ENCODE measurements at regions of chr3 and their contacts with region 1.

Region 1: GRCh38 chr3:47522082-47522987 is 8.8 kb upstream of the ELP6 start:
- DNase-seq: peak; percentile 75
- H3K4me3 ChIP-seq: no peak overlapping the region
- H3K27ac ChIP-seq: no peak overlapping the region
- H3K4me1 ChIP-seq: peaks cover 6% of the 10 kb centered on the region
- H3K27me3 ChIP-seq: no peaks in the 10 kb centered on the region
- CTCF ChIP-seq: peak; percentile 90 to 93

Region 2: DNA sequence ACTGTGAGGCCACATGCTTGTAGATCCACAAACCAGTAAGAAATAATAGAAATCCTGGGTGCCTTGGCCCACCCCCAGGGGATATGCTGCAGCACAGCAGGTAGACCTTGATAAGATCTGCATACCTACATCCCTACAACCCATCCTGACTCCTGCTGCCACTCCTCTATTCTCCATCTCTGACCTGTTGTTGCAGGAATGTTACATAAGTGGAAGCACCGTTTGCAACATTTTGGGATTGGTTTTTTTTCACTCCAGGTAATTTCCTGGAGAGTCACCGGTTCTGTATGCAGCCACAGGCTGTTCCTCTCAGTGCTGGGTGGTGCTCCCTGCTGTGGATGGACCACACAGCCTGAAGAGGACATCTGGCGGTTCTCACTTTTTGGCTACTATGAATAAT is 72.5 kb after region 1 on chr3:
- CTCF ChIA-PET with region 1: no interaction called
- dilution Hi-C with region 1: no loop called
- in situ Hi-C with region 1: no loop called
- intact Hi-C with region 1: loop called (anchors 1 kb)
- DNase-seq: peak; percentile 80
- H3K4me3 ChIP-seq: no peak overlapping the region
- H3K27ac ChIP-seq: no peak overlapping the region
- H3K4me1 ChIP-seq: peaks cover 5% of the 10 kb centered on the region
- H3K27me3 ChIP-seq: no peaks in the 10 kb centered on the region
- CTCF ChIP-seq: no peak

Region 3: GRCh38 chr3:47612178-47612577 is 89.8 kb after region 1 on chr3:
- CTCF ChIA-PET with region 1: no interaction called
- dilution Hi-C with region 1: no loop called
- in situ Hi-C with region 1: no loop called
- intact Hi-C with region 1: loop called (anchors 5 kb)
- DNase-seq: peak; percentile 11
- H3K4me3 ChIP-seq: no peak overlapping the region
- H3K27ac ChIP-seq: no peak overlapping the region
- H3K4me1 ChIP-seq: peaks cover 7% of the 10 kb centered on the region
- H3K27me3 ChIP-seq: no peaks in the 10 kb centered on the region
- CTCF ChIP-seq: no peak

Region 4: DNA sequence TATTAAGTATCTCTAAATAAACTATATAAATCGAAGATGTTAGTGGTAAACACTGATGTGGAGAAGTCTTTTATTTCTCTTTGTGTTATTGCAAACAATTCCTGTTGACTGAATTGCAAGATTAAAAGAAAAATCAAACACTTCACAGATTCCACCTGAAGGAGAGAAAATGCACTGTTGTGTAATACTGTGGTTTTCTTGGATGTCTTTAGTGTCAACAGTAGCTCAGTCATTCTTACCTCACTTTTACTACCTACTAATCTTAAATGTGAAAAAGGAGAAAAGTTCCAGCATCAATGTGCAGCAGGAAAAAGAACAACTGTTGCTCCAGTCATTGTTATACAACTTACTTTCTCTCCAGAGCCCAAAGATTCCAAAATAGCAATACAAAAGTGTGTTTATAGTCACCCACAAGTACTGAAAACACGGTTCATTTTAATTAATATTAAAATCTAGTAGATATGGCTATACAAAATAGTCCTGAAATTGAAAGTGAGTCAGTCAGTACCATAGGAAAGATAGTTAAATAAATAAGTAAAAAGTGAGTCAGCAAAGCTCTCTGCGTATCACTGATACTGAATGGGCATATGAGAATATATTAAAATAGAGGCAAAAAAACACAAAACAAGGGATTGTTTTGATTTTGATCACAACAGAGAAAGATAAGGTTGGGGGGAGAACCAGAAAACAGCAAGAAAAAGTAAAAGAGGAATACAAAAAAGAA is 146.9 kb after region 1 on chr3:
- CTCF ChIA-PET with region 1: no interaction called
- dilution Hi-C with region 1: no loop called
- in situ Hi-C with region 1: no loop called
- intact Hi-C with region 1: loop called (anchors 1 kb)
- DNase-seq: peak; percentile 51
- H3K4me3 ChIP-seq: no peak overlapping the region
- H3K27ac ChIP-seq: no peak overlapping the region
- H3K4me1 ChIP-seq: peaks cover 3% of the 10 kb centered on the region
- H3K27me3 ChIP-seq: no peaks in the 10 kb centered on the region
- CTCF ChIP-seq: no peak

Region 5: GRCh38 chr3:47791193-47791855 is 269.0 kb after region 1 on chr3:
- CTCF ChIA-PET with region 1: interaction called, 5 read pairs
- dilution Hi-C with region 1: no loop called
- in situ Hi-C with region 1: loop called (anchors 5 to 10 kb)
- intact Hi-C with region 1: loop called (anchors 1 kb)
- DNase-seq: no peak
- H3K4me3 ChIP-seq: no peak overlapping the region
- H3K27ac ChIP-seq: no peak overlapping the region
- H3K4me1 ChIP-seq: no peaks in the 10 kb centered on the region
- H3K27me3 ChIP-seq: no peaks in the 10 kb centered on the region
- CTCF ChIP-seq: no peak

Region 6: GRCh38 chr3:47824541-47825473 is 302.5 kb after region 1 on chr3:
- CTCF ChIA-PET with region 1: no interaction called
- dilution Hi-C with region 1: no loop called
- in situ Hi-C with region 1: no loop called
- intact Hi-C with region 1: loop called (anchors 1 kb)
- DNase-seq: peak; percentile 82
- H3K4me3 ChIP-seq: peak overlapping the region; percentile 73 to 93 (median 82)
- H3K27ac ChIP-seq: peak overlapping the region; percentile 61
- H3K4me1 ChIP-seq: peaks cover 5% of the 10 kb centered on the region
- H3K27me3 ChIP-seq: no peaks in the 10 kb centered on the region
- CTCF ChIP-seq: peak; percentile 51 to 70

Region 7: GRCh38 chr3:48151058-48151806 is 628.9 kb after region 1 on chr3:
- CTCF ChIA-PET with region 1: no interaction called
- dilution Hi-C with region 1: no loop called
- in situ Hi-C with region 1: no loop called
- intact Hi-C with region 1: loop called (anchors 1 kb)
- DNase-seq: peak; percentile 66
- H3K4me3 ChIP-seq: no peak overlapping the region
- H3K27ac ChIP-seq: no peak overlapping the region
- H3K4me1 ChIP-seq: peaks cover 12% of the 10 kb centered on the region
- H3K27me3 ChIP-seq: no peaks in the 10 kb centered on the region
- CTCF ChIP-seq: peak; percentile 90 to 96